MCF 10A (cell line): ENCODE measurements at regions of chr1 and their contacts with region 1.

Region 1: DNA sequence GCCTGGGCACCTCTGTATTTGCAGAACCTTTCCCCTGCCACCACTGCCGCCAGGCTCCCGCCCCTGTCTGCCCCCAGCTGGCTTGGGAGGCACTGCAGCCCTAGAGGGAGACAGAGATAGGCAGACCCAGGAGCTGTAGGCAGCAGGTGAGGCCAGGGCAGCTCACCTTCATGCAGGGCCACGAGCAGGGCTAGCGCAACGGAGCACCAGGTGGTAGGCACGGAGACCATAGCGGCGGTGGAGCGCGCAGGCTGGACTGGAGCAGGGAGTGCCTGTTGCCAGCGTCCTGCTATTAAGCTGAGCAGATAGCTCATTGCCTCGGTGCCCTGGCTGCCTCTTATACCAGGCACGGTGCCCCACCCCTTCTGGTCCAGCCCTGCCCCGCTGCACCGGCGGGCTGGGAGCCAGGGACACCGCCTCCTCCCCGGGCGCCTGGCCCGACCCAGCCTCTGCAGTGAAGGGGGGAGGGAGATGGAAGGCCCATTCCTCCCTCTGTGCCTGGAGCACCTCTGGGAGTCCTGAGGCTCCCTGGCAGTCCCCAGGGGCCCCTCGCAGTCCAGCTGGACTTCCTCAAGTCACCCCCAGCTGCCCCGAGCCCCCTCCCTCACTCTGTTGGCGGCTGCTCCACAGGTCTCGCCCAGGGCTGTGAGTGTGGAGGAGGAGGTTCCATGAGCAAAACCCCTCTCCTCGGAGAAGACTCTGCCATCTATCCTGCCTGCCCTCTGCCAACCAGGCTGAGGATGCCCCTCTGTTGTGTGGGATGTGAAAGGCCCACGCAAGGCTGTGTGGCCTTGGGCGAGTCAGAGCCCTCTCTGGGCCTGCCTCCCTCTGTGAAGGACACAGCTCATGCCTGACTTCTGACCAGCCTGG is at the start of gene EDN2:
- DNase-seq: peak; percentile 87
- H3K4me3 Mint-ChIP-seq: peak within 1 kb of the TSS; percentile 71
- H3K27ac Mint-ChIP-seq: peak within 1 kb of the TSS; percentile 54
- H3K4me1 Mint-ChIP-seq: peaks cover 40% of the 10 kb centered on the region
- H3K27me3 Mint-ChIP-seq: no peaks in the 10 kb centered on the region
- CTCF ChIP-seq: no peak
- total RNA-seq, gene EDN2: 0.58 and 0.66 TPM in 2 replicates

Region 2: GRCh38 chr1:41444246-41444645 is 40.4 kb before region 1 on chr1:
- CTCF ChIA-PET with region 1: no interaction called
- POLR2A ChIA-PET with region 1: interaction called, 17 read pairs
- intact Hi-C with region 1: no loop called
- DNase-seq: no peak
- H3K4me3 Mint-ChIP-seq: no peak overlapping the region
- H3K27ac Mint-ChIP-seq: no peak overlapping the region
- H3K4me1 Mint-ChIP-seq: peaks cover 20% of the 10 kb centered on the region
- H3K27me3 Mint-ChIP-seq: no peaks in the 10 kb centered on the region
- CTCF ChIP-seq: no peak

Region 3: DNA sequence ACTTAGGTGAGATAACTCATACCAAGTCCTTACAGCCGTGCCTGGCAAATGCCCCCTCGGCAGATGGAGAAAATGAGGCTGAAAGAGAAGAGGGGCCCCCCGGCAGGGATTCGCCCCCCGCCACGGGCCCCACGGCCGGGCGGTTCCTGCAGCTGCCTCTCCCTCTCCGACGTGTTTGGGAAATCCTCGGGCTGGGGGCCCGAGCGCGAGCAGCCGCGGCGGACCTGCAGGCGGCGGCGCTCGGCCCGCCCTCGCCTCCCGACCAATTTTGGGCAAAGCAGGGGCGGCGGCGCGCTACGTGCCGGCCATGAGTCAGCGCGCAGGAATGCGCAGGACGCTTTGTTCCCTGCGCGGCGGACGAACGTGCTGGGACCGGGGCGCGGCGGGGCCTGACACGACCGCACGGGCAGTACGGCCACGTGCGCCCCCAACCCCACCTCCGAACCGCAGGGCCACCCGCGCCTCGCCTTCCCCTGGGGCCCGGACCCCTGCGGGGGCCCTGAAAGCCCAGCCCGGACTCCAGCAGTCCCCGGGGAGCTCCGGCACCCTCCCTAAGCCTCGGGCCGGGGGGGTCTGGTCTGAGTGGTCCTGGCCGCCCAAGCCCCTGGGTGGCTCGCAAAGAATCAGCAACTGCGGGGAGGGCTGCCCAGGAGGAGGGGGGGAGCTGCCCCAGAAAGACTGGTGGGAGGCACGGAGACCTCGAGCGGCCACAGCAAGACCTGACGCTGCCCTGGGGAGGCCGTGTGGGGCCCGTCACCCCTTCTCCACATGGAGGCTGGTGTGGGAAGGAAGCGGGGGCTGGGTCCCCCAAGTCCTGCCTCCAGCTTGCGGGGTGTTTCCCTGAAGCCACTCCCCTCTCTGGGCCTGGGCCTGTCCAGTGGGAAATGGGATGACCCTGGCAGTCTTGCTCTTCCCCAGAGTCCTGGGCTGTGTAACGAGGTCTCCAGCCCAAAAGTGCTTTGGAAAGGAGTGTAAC is 11.8 kb after region 1 on chr1:
- CTCF ChIA-PET with region 1: interaction called, 26 read pairs
- POLR2A ChIA-PET with region 1: interaction called, 87 read pairs
- intact Hi-C with region 1: no loop called
- DNase-seq: peak; percentile 88
- H3K4me3 Mint-ChIP-seq: peak overlapping the region; percentile 36
- H3K27ac Mint-ChIP-seq: peak overlapping the region; percentile 91
- H3K4me1 Mint-ChIP-seq: peaks cover 58% of the 10 kb centered on the region
- H3K27me3 Mint-ChIP-seq: no peaks in the 10 kb centered on the region
- CTCF ChIP-seq: no peak